ENCODE measurements at regions of chr12 and their contacts with region 1.

Region 1: DNA sequence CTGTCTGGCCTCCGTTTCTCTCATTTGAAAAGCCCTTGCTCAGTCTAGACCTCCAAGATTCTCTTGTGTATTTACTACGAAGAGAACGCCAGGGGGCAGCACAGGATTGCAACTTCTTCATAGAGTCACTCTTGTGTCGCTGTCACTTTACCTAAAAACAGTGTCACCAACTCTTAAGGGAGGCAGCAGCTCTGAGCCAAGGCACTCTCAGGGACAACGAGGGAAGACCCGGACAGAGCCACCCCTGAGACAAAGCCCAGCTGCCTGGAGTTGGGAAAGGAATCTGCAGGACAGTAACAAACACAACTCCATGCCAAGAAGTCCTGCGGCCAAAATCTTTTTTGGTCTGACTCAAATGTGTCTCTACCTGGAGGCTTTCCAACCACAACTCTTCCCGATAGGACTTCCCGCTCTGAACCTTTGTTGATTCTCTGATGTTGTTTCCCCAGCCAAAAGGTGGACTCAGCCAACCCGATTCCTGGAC is 9.6 kb upstream of the RPAP3 start:
- DNase-seq: peak; percentile 68 to 92
- ATAC-seq: peak; percentile 91 to 95 (median 91)
- H3K4me3 ChIP-seq: no peak overlapping the region
- H3K4me3 Mint-ChIP-seq: no peak overlapping the region
- H3K27ac ChIP-seq: no peak overlapping the region
- H3K27ac Mint-ChIP-seq: peak overlapping the region in 1 of 2 donors; percentile 39
- H3K4me1 ChIP-seq: peaks cover 9% of the 10 kb centered on the region
- H3K4me1 Mint-ChIP-seq: peaks cover 7 to 15% of the 10 kb centered on the region in 2 donors
- H3K27me3 ChIP-seq: no peaks in the 10 kb centered on the region
- H3K27me3 Mint-ChIP-seq: peaks cover 0 to 7% of the 10 kb centered on the region in 2 donors
- CTCF ChIP-seq: peak; percentile 83

Region 2: DNA sequence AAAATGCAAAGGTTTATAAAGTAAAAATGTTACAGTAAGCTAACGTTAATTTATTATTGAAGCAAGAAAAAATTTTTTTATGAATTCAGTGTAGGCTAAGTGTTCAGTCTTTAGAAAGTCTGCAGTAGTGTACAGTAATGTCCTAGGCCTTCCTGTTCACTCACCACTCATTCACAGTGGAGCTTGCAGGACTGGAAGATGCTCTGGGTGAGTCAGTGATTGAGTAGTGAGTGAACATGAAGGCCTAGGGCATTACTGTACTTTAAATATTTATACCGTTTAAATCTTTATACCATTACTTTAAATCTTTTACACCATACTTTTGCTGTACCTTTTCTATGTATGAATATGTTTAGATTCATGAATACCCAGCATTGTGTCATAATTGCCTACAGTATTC is 769.3 kb before region 1 on chr12:
- intact Hi-C with region 1: no loop called
- DNase-seq: no peak
- ATAC-seq: no peak
- H3K4me3 ChIP-seq: no peak overlapping the region
- H3K4me3 Mint-ChIP-seq: no peak overlapping the region
- H3K27ac ChIP-seq: no peak overlapping the region
- H3K27ac Mint-ChIP-seq: no peak overlapping the region
- H3K4me1 ChIP-seq: no peaks in the 10 kb centered on the region
- H3K4me1 Mint-ChIP-seq: no peaks in the 10 kb centered on the region
- H3K27me3 ChIP-seq: no peaks in the 10 kb centered on the region
- H3K27me3 Mint-ChIP-seq: peaks cover 0 to 8% of the 10 kb centered on the region in 2 donors
- CTCF ChIP-seq: no peak

Region 3: GRCh38 chr12:47767216-47767724 is 51.8 kb after region 1 on chr12:
- intact Hi-C with region 1: loop called (anchors 1 kb)
- DNase-seq: peak; percentile 47 to 83
- ATAC-seq: peak; percentile 68 to 78 (median 71)
- H3K4me3 ChIP-seq: no peak overlapping the region
- H3K4me3 Mint-ChIP-seq: no peak overlapping the region
- H3K27ac ChIP-seq: no peak overlapping the region
- H3K27ac Mint-ChIP-seq: no peak overlapping the region
- H3K4me1 ChIP-seq: peaks cover 12% of the 10 kb centered on the region
- H3K4me1 Mint-ChIP-seq: no peaks in the 10 kb centered on the region
- H3K27me3 ChIP-seq: no peaks in the 10 kb centered on the region
- H3K27me3 Mint-ChIP-seq: peaks cover 4 to 5% of the 10 kb centered on the region in 2 donors
- CTCF ChIP-seq: peak; percentile 69

Region 4: DNA sequence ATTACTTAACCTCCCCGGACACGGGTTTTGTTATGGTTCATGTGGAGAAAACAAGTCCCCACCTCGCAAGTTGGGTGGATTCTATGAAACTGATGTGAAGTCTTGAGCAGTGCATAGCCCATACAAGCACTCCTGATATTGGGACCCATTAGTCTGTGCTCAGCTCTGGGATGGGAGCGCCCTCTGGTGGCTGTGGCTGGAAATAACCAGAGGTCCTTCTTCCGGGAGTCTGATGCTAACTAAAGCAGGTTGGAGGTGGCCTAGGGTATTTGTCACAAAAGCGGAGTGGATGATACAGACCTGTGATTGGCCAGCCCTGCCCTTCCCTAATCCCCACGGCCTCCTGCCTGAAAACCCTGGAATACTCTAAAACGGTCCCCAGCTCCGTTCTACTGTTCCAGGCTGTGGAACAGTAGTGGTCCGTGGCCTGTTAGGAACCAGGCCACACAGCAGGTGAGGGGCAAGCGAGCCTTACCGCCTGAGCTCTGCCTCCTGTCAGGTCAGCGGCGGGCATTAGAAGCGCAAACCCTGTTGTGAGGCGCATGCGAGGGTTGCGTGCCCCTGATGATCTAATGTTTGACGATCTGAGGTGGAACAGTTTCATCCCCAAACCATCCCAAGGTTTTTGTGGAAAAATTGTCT is 64.0 kb after region 1 on chr12:
- intact Hi-C with region 1: loop called (anchors 1 kb)
- DNase-seq: peak; percentile 91 to 94
- ATAC-seq: peak; percentile 92 to 98 (median 92)
- H3K4me3 ChIP-seq: no peak overlapping the region
- H3K4me3 Mint-ChIP-seq: no peak overlapping the region
- H3K27ac ChIP-seq: no peak overlapping the region
- H3K27ac Mint-ChIP-seq: peak overlapping the region; percentile 68 to 70
- H3K4me1 ChIP-seq: peaks cover 31% of the 10 kb centered on the region
- H3K4me1 Mint-ChIP-seq: peaks cover 7 to 33% of the 10 kb centered on the region in 2 donors
- H3K27me3 ChIP-seq: no peaks in the 10 kb centered on the region
- H3K27me3 Mint-ChIP-seq: peaks cover 0 to 4% of the 10 kb centered on the region in 2 donors
- CTCF ChIP-seq: peak; percentile 92

Region 5: DNA sequence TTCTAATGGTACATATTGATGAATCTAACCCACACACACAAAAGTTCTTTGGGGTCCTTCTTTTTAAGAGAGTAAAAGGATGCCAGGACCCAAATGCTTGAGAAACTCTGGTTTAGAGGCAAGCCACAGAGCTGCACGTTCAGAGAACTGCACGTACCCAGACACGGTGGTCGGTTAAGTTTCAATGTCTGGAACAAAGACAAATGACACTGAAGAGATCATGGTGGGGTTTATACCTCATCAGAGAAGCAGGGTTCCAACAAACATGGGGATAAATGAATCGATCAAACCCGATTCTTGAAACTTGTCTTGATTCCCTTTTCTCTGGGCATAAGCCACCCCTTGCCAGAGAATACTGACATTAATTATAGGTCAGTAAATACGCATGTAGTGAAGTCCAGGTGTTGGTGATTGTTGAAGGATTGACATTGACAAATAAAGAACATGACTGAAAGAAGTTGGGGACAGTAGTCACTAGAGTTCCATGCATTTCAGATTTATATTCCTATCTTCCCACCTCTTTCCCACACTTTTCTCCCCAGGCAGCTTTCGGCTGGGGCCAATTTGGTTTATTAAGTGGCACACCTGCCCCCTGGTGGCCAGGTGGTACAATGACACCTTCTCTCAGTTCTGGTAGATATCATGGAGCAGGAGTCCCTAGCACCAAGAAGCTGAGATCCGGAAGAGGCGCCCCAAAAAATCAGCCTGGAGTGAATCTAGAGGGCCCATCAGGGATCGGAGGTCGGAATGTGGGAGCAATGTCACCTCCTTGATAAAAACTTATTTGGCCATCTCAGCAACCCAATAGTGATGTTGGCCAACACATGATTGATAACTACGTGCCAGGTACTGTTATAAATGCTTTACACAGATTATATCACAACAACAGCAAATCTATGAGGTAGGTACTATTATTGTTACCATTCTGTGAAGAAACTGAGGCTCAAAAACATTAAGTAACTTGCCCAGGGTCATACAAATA is 122.0 kb after region 1 on chr12:
- intact Hi-C with region 1: loop called (anchors 1 kb)
- DNase-seq: peak; percentile 63 to 88
- ATAC-seq: peak; percentile 55 to 62 (median 57)
- H3K4me3 ChIP-seq: no peak overlapping the region
- H3K4me3 Mint-ChIP-seq: no peak overlapping the region
- H3K27ac ChIP-seq: no peak overlapping the region
- H3K27ac Mint-ChIP-seq: peak overlapping the region in 1 of 2 donors; percentile 35
- H3K4me1 ChIP-seq: peaks cover 35% of the 10 kb centered on the region
- H3K4me1 Mint-ChIP-seq: peaks cover 43 to 47% of the 10 kb centered on the region in 2 donors
- H3K27me3 ChIP-seq: no peaks in the 10 kb centered on the region
- H3K27me3 Mint-ChIP-seq: peaks cover 0 to 5% of the 10 kb centered on the region in 2 donors
- CTCF ChIP-seq: peak; percentile 93

Region 6: DNA sequence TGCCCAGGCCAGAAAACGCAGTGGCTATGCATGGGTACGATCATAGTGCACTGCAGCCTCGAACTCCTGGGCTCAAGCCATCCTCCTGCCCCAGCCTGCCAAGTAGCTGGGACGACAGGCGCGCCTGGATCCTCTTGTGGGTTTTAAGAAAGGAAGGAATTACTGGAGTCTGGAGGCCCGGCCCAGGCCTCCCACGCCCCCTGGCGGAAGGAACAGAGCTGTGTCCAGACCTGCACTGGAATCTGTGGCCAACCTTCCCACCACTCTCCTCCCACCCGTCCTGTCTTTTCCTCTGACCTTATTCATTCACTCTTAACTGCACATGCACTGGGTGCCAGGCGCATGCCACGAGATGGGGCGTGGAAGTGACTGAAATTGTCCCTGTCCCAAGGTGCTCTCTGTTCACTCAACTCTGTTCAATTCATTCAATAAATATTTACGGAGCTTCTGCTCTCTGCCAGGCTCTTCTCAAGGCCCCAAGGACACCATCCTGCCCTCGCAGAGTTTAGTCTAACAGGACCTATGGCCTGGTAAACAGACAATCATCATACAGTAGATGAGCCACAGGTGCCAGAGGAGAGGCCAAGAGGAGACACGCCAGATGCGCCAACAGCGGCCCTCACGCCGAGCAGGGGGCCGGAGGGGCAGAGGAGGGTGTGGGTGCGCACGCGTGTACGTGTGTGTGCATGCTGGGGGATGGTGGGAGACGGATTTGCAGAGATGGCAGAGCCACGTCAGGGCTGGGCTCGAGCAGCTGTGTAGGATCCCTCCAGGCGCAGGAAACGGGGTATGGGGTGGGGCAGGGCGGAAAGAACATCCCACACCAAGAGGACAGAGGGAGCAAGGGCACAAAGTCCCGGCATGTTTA is 234.2 kb after region 1 on chr12:
- intact Hi-C with region 1: loop called (anchors 5 kb)
- DNase-seq: peak; percentile 45 to 69
- ATAC-seq: peak; percentile 67 to 76 (median 73)
- H3K4me3 ChIP-seq: no peak overlapping the region
- H3K4me3 Mint-ChIP-seq: no peak overlapping the region
- H3K27ac ChIP-seq: no peak overlapping the region
- H3K27ac Mint-ChIP-seq: no peak overlapping the region
- H3K4me1 ChIP-seq: no peaks in the 10 kb centered on the region
- H3K4me1 Mint-ChIP-seq: no peaks in the 10 kb centered on the region
- H3K27me3 ChIP-seq: peaks cover 2% of the 10 kb centered on the region
- H3K27me3 Mint-ChIP-seq: peaks cover 7 to 14% of the 10 kb centered on the region in 2 donors
- CTCF ChIP-seq: peak; percentile 70

Region 7: DNA sequence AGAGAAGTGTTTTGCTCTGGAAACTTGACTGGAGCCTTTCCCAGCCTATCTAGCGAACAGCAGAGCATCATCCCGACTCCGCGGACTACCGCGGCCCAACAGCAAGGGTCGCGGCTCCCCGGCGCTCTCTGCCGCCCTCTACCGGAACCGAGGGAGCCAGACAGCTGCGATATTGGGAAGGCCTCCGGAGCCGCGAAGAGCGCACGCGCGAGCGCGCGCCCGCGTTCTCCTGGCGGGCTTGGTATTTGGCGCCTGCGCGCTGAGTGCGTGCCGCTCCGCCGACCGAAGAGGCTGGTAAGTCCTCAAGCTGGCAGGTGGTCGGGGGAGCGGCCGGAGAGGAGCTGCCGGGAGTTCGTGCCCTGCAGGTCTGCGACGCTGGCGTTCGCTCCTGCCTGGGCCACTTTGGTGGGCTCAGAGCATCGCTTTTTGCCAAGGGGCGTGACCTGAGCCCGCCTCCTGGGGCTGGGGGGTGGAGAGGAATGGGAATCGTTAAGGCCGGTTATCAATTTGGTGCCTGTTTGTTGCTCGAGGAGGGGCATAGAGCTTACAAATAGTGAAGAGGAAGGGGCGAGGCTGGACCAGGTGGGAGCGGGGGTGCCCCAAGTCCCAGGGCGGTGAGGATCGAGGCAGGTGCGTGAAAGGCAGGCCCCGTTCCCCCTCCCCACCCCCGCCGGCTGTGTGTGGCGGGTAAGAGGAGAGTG is 248.1 kb after region 1 on chr12 and contains the start of gene TMEM106C:
- intact Hi-C with region 1: loop called (anchors 5 kb)
- DNase-seq: peak; percentile 90 to 98
- ATAC-seq: peak; percentile 98 to 99 (median 99)
- H3K4me3 ChIP-seq: peak within 1 kb of the TSS; percentile 99
- H3K4me3 Mint-ChIP-seq: peak within 1 kb of the TSS; percentile 98
- H3K27ac ChIP-seq: peak within 1 kb of the TSS; percentile 34
- H3K27ac Mint-ChIP-seq: peak within 1 kb of the TSS; percentile 83 to 98
- H3K4me1 ChIP-seq: peaks cover 14% of the 10 kb centered on the region
- H3K4me1 Mint-ChIP-seq: peaks cover 23 to 41% of the 10 kb centered on the region in 2 donors
- H3K27me3 ChIP-seq: no peaks in the 10 kb centered on the region
- H3K27me3 Mint-ChIP-seq: peaks cover 0 to 12% of the 10 kb centered on the region in 2 donors
- CTCF ChIP-seq: peak; percentile 94
- total RNA-seq, gene TMEM106C: 19.1 to 26.2 (median 22.5) TPM

Region 8: GRCh38 chr12:48165094-48165981 is 449.9 kb after region 1 on chr12:
- intact Hi-C with region 1: loop called (anchors 5 kb)
- DNase-seq: peak in 1 of 2 donors; percentile 89
- ATAC-seq: peak; percentile 76 to 93 (median 81)
- H3K4me3 ChIP-seq: no peak overlapping the region
- H3K4me3 Mint-ChIP-seq: no peak overlapping the region
- H3K27ac ChIP-seq: no peak overlapping the region
- H3K27ac Mint-ChIP-seq: no peak overlapping the region
- H3K4me1 ChIP-seq: no peaks in the 10 kb centered on the region
- H3K4me1 Mint-ChIP-seq: no peaks in the 10 kb centered on the region
- H3K27me3 ChIP-seq: no peaks in the 10 kb centered on the region
- H3K27me3 Mint-ChIP-seq: peaks cover 17% of the 10 kb centered on the region in 2 donors
- CTCF ChIP-seq: peak; percentile 97

Measured in natural killer cell (primary cell).